ENCODE measurements at regions of chr2 and their contacts with region 1.

Region 1: DNA sequence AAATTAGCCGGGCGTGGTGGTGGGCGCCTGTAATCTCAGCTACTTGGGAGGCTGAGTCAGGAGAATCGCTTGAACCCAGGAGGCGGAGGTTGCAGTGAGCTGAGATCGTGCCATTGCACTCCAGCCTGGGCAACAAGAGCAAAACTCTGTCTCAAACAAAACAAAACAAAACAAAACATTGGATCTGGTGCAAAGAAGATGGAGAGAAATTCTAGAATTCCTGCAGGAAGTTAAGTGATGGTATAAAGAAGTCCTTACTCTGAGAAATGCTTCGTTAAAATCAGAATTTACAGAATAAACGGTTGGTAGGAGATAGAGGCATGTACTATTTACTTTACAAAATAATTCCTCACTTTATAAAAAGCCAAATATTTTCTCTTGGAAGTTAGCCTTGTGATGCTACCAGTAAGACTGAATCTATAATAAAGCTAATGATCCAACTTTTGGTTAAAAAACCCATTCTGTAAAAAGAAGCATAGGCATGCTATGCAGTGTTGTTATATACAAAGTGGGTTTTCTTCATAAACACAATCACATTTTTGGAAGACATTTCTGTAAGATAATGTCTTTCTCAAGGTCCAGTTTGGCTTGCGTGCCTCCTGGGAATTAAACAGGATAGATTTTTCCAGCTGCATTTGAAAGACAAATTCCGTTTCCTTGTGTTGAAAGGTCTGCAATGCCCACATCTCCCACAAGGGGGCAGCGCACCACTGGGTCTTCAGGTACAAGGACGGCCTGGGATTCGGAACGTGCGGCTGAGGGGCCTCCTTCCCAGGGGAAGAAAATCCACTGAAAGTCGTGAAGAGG is 35.6 kb upstream of the PNO1 start:
- DNase-seq: peak; percentile 91

Region 2: DNA sequence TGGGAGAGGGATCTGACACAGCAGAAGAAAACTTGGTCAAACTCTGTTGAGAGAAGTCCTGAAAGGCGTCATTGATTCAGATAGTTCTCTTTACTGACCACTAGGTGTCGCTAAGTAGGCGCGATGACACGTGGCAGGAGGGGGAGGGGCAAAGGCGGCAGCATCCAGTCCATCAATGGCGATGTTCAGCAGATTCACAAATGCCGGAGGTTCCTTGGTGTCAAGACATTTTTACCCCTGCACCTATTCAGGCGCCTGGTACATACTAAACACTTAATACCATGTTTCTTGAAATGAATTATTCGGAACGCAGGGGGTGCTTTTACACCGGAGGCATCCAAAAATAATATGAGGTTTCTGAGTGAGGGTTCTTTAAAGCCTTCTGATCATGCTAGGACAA is 240.0 kb after region 1 on chr2:
- intact Hi-C with region 1: loop called (anchors 5 kb)
- DNase-seq: peak; percentile 91

Region 3: GRCh38 chr2:68441179-68441993 is 319.3 kb after region 1 on chr2:
- intact Hi-C with region 1: loop called (anchors 2 kb)
- DNase-seq: peak; percentile 88